ENCODE measurements at regions of chr6 and their contacts with region 1.

Region 1: GRCh38 chr6:35624341-35625070 is 64.2 kb downstream of the FKBP5 start:
- DNase-seq: no peak
- H3K4me3 Mint-ChIP-seq: no peak overlapping the region
- H3K27ac Mint-ChIP-seq: peak overlapping the region; percentile 1
- H3K4me1 Mint-ChIP-seq: peaks cover 6% of the 10 kb centered on the region
- H3K27me3 Mint-ChIP-seq: no peaks in the 10 kb centered on the region

Region 2: DNA sequence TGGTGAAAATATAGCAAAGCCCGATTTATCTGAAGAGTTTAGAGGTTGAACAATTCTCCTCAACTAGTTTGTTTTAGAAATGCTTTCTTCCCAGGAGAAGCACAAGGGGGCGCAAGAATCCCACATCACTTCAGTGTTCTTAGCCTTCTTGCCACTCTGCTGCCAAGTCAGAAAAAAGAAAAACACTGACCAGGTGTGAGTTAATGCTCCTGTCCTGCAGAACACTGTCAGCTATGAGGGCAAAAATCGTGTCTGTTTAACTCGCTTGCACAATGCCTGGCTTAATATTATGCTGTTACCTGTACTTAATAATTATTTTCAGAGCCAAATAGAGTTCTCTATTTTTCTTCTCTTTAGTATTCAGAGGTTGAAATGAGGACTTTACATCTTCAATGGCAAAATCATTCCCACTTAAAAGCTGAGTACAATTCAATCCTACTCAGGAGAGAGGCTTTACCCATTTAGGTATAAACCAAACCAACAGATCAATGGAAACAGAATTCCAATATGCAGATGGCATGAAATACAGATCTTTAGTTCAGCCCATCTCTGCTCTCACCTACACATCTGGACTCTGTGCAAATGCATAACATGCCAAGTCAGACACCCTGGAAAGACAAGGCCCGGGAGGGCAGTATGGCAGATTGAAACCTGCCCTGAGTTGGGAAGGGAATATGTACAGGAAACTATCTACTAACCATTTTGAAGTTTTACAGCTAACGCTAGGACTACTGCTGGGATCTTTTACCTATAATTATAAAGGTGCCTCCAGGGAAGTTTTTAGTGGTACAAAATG is 40.4 kb before region 1 on chr6:
- CTCF ChIA-PET with region 1: interaction called, 13 read pairs
- POLR2A ChIA-PET with region 1: no interaction called
- DNase-seq: peak; percentile 77
- H3K4me3 Mint-ChIP-seq: no peak overlapping the region
- H3K27ac Mint-ChIP-seq: no peak overlapping the region
- H3K4me1 Mint-ChIP-seq: peaks cover 15% of the 10 kb centered on the region
- H3K27me3 Mint-ChIP-seq: no peaks in the 10 kb centered on the region

Region 3: GRCh38 chr6:35590622-35591066 is 33.9 kb before region 1 on chr6:
- CTCF ChIA-PET with region 1: interaction called, 17 read pairs
- POLR2A ChIA-PET with region 1: no interaction called
- DNase-seq: no peak
- H3K4me3 Mint-ChIP-seq: no peak overlapping the region
- H3K27ac Mint-ChIP-seq: peak overlapping the region; percentile 16
- H3K4me1 Mint-ChIP-seq: peaks cover 28% of the 10 kb centered on the region
- H3K27me3 Mint-ChIP-seq: no peaks in the 10 kb centered on the region

Measured in activated CD4-positive, alpha-beta memory T cell treated with anti-CD3 and anti-CD28 coated beads, Interleukin-2, amount 10 ng/mL, durations not matched to agents 7 days and 5 days (primary cell).